ENCODE measurements at regions of chr12 and their contacts with region 1.

Region 1: GRCh38 chr12:131928711-131929580 is at the start of gene PUS1:
- DNase-seq: peak; percentile 92
- H3K4me3 Mint-ChIP-seq: peak within 1 kb of the TSS; percentile 98
- H3K27ac Mint-ChIP-seq: peak within 1 kb of the TSS; percentile 92
- H3K4me1 Mint-ChIP-seq: peaks cover 17% of the 10 kb centered on the region
- H3K27me3 Mint-ChIP-seq: no peaks in the 10 kb centered on the region
- total RNA-seq, gene PUS1: 71.2 and 79.2 TPM in 2 replicates

Region 2: DNA sequence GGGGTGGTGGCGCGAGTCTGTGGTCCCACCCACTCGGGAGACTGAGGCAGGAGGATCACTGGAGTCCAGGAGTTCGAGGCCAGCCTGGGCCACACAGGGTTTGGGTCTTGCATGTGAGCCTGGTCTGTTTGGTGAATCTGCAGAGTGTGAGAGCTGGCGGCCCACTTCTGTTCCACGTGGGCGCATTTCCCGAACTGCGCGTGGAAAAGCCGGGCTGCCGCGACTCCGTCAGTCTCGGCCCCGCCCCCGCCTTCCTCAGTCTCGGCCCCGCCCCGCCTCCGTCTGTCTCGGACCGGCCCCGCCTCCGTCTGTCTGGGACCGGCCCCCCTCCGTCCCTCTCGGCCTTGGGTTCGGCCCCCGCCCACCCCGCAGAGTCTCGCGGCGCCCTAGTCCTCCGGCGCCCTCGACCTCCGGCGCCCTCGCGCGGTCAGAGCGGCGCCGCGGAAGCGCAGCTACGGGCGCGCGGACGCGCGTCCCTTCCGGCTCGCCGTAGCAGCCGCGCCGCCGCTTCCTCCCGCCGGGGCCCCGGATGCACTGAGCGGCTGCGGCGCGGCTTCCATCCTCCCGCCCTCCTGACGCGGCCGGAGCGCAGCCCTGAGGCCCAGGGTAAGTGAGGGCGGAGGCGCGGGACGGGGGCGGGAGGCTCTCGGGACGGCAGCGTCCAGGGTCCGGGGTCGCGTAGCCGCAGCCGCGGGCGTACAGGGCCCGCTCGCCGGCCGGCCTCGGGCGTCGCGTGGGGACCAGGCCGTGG is 20.7 kb after region 1 on chr12 and contains the start of gene EP400:
- intact Hi-C with region 1: loop called (anchors 1 kb)
- DNase-seq: peak; percentile 89
- H3K4me3 Mint-ChIP-seq: peak within 1 kb of the TSS; percentile 89
- H3K27ac Mint-ChIP-seq: peak within 1 kb of the TSS; percentile 85
- H3K4me1 Mint-ChIP-seq: peaks cover 23% of the 10 kb centered on the region
- H3K27me3 Mint-ChIP-seq: no peaks in the 10 kb centered on the region
- total RNA-seq, gene EP400: 57.7 and 58.0 TPM in 2 replicates